Posterior cingulate gyrus (tissue), 11 donors: ENCODE measurements at regions of chr19 and their contacts with region 1.

Region 1: GRCh38 chr19:18203863-18204393 is at the start of gene RAB3A:
- DNase-seq: peak; percentile 100

Region 2: DNA sequence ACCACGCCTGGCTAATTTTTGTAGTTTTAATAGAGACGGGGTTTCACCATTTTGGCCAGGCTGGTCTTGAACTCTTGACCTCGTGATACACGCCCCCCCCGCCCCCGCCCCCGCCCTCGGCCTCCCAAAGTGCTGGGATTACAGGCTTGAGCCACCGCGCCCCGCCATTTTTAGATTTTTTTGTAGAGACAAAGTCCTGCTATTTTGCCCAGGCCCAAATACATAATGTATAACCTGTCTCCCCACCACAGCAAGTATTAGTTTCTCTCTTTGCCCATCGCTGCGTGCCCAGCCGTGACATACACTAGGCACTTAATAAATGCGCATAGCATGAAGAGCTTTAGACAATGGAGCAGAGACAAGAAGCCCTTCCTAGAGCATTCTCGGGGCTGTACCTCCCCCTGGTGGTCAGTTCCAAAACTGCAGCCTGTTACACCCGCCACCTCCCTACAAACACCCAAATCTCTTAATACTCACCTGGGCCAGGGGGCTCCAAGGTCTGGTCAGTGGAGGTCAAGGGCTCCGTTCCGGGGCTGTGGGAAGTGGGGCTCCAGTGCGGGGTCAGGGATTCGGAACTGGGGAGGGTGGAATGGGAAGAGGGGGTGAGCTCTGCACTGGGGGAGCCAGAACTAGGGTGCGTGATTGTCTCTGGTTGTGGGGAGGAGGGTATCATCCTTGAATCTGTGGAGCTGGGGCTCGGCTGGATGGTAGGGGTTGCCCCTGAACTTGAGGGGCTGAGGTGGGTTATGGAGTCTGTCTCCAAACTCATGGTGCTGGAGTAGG is 47.9 kb after region 1 on chr19:
- intact Hi-C with region 1: loop called (anchors 2 kb)
- DNase-seq: peak; percentile 54 to 95 (median 82)

Region 3: DNA sequence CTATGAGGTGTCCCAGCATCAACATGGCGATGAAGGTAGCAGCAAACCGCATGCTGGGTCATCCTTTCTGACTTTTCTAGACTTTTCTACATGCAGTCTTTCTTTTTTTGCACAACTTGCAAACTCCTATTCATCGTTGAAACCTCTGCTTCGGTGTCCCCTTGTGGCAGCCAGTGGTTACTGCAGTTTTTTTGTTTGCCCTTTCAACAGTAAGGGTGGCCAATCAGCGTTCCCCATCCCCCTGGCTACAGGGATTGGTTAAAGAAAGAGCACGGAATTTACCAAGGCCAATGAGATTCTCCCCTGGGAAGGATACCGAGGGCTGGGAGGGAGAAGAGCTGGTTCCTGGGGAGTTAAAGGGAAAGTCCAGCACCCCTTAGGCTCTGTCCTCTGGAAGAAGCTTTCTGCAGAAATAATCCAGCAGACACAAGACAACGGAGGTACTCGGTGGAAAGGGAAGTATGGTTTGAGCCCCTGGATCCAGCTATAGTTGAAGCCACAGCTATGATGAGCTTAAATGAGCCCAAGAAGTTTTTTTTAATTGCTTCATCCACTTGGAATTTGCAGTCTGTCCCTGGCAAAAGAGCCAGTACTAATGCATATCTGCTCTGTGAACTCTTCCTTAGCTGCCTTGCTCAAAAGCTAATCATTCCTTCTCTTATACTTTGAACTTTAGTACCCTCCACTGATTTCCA is 124.6 kb after region 1 on chr19:
- intact Hi-C with region 1: loop called (anchors 5 kb)
- DNase-seq: peak; percentile 83 to 98 (median 92)